ENCODE measurements at regions of chr11 and their contacts with region 1.

Region 1: DNA sequence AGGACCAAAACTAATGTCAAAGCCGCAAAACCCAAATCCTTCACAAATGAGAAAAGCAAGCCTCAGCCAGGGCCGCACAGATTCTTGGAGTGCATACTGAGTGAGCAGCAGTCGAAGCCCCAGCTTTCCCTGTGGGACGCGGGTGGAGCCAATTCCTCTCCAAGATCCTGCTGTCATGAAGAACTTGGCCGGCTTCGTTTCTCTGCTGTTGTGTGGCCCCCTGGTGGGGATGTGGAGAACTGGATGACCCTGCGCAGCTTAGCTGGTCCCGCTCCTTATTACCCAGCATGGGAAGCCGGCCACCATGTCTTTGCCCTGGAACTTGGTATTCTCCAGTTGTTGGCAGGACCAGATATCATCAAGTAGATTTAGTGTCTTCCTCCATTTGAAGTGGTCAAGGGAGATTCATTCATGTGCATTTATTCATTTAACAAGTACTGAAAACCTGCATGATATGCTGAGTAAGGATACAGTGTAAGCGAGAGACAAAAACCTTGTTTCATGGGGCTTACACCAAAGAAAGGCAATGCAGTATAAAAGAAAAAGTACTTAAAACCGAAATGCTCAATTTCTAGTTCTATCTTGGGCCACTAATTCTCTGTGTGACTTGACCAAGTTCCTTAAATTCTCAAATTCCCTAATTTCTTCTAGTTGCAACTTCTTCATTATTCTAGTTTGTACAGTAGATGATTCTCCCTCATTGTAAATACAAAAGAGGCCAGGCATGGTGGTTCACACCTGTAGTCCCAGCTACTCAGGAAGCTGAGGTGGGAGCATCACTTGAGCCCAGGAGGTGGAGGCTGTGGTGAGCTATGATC is 56.7 kb upstream of the CRTAM start:
- DNase-seq: peak; percentile 78 to 90 (median 84)
- H3K4me3 ChIP-seq: no peak overlapping the region
- H3K27ac ChIP-seq: no peak overlapping the region
- H3K4me1 ChIP-seq: peaks cover 9% of the 10 kb centered on the region
- H3K27me3 ChIP-seq: no peaks in the 10 kb centered on the region
- CTCF ChIP-seq: peak; percentile 43 to 84 (median 80)
- EP300 ChIP-seq: no peak
- POLR2A ChIP-seq: no peak

Region 2: DNA sequence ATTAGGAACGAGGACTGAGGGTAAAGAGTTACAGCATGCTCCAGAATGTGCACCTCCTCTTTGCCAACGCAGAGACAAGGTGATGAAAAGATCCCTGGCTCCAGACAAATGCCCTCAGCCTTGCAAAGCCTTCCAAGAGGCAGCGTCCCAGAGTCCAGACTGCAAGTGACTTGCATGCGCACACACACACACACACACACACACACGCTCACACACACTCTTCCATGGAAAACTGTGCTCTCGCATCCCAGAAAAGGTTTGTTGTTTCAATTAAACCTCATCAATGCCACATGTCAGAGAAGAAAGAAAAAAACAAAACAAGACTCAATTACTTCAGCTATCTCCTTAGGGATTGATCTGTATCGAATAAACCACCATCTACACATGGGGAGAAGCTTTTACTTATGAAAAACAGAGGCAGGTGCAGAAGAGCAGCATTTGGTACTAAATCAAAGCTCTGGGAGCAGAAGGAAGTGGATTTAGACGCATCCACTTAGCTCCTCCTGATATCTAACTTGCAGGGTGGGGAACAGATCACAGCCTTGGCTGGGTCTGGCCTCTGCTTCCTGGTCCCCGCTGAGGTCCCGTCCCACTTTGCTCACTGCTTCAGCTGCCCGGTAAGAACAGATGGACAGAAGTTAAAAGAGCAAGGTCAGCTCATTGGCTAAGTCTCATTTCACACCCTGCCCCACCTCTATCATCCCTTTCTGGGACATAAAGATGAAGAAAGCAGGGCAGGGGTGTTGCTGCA is 415.8 kb before region 1 on chr11:
- intact Hi-C with region 1: no loop called
- DNase-seq: peak in 2 of 5 donors; percentile 28 to 46
- H3K4me3 ChIP-seq: no peak overlapping the region
- H3K27ac ChIP-seq: no peak overlapping the region
- H3K4me1 ChIP-seq: peaks cover 9% of the 10 kb centered on the region
- H3K27me3 ChIP-seq: no peaks in the 10 kb centered on the region
- CTCF ChIP-seq: no peak
- EP300 ChIP-seq: no peak
- POLR2A ChIP-seq: no peak

Region 3: DNA sequence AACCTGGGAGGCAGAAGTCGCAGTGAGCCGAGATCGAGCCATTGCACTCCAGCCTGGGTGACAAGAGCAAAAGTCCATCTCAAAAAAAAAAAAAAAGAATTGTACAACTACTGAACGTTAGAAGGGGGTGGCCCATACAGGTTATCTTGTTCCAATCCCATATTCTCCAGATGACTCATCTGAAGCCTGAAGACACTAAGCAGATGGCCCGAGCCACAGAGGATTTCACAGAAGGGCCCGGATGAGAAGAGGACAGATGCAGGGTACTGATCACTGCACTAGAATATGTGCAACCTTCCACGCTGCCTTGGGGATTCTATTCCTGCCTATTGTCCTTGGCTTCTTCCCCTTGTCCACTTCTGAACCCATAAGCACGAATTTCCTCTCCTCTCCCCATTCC is 196.9 kb before region 1 on chr11:
- intact Hi-C with region 1: loop called in 1 of 4 experiments (anchors 5 kb)
- DNase-seq: no peak
- H3K4me3 ChIP-seq: no peak overlapping the region
- H3K27ac ChIP-seq: no peak overlapping the region
- H3K4me1 ChIP-seq: no peaks in the 10 kb centered on the region
- H3K27me3 ChIP-seq: no peaks in the 10 kb centered on the region
- CTCF ChIP-seq: no peak
- EP300 ChIP-seq: no peak
- POLR2A ChIP-seq: no peak

Region 4: DNA sequence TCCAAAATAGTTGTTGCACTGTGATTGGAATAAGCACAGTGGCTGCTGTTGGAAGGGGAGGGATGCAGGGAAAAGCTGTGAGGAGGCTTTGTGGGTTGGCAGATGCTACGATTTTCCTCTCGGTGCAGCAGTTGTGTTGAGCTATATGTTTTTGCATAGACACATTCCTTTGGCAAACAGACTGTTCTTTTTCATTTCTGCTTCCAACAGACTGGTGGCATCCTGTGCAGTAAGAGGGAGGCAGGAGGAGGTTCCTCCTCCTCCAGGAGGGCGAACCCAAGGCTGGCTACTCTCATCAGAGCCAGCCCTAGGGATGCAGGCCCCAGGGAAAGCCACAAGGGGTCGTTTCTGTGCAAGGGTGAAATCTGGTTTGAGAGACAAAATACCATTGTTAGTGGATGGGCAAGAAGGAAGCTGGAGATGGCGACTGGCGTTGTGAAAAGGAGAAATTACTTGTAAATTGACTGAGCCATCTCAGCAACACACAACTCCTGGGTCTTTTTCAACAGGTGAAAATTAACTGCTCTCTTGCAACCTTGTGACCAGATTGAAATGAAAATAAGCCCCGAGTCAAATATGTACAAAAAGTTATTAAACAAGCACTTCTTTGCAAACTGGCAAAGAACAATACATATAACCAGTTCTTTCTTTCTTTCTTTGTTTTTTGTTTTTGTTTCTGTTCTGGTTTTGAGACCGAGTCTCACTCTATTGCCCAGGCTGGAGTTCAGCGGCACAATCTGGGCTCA is 152.6 kb before region 1 on chr11:
- intact Hi-C with region 1: loop called in 1 of 4 experiments (anchors 5 kb)
- DNase-seq: peak; percentile 22 to 68 (median 49)
- H3K4me3 ChIP-seq: no peak overlapping the region
- H3K27ac ChIP-seq: no peak overlapping the region
- H3K4me1 ChIP-seq: no peaks in the 10 kb centered on the region
- H3K27me3 ChIP-seq: no peaks in the 10 kb centered on the region
- CTCF ChIP-seq: peak; percentile 18 to 58 (median 27)
- EP300 ChIP-seq: no peak
- POLR2A ChIP-seq: no peak

Region 5: GRCh38 chr11:122655527-122656072 is 126.0 kb before region 1 on chr11 and contains the start of gene UBASH3B:
- intact Hi-C with region 1: loop called in 3 of 4 experiments (anchors 10 kb)
- DNase-seq: peak; percentile 47 to 69 (median 62)
- H3K4me3 ChIP-seq: peak within 1 kb of the TSS; percentile 72
- H3K27ac ChIP-seq: peak within 1 kb of the TSS; percentile 51 to 81
- H3K4me1 ChIP-seq: peaks cover 4% of the 10 kb centered on the region
- H3K27me3 ChIP-seq: no peaks in the 10 kb centered on the region
- CTCF ChIP-seq: no peak
- EP300 ChIP-seq: no peak
- POLR2A ChIP-seq: no peak
- total RNA-seq, gene UBASH3B: 0.92 to 5.9 (median 1.8) TPM

Region 6: DNA sequence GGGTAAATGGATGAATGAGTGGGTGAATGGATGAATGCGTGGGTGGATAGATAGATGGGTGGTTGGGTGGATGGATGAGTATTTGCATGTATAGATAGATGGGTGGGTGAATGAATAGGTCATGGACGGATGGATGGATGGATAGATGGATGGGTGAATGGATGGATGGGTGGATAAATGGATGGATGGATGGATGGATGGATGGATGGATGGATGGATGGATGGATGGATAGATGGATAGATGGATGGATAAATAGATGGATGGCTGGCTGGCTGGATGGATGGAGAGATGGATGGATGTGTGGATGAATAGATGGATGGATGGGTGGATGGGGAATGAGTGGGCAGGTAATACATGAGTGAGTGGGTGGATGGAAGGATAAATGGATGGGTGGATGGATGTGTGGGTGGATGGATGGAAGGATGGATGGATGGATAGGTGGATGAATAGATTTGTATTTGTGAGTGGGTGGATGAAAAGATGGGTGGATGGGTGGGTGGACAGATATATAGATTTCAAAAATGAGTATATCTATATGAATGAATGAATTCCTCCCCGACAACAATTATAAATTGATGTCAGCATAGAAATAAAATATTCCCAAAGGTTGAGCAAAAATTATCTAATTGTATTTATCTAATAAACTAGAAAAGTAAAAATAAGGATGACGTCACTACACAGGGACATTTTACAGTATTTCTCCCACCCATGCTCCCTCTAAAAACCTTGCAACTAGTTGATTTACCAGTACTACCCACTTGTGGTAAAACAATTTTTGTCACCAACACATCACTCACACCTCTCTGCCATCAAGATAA is 56.1 kb after region 1 on chr11:
- intact Hi-C with region 1: loop called in 1 of 4 experiments (anchors 2 kb)
- DNase-seq: no peak
- H3K4me3 ChIP-seq: no peak overlapping the region
- H3K27ac ChIP-seq: no peak overlapping the region
- H3K4me1 ChIP-seq: no peaks in the 10 kb centered on the region
- H3K27me3 ChIP-seq: no peaks in the 10 kb centered on the region
- CTCF ChIP-seq: no peak
- EP300 ChIP-seq: no peak
- POLR2A ChIP-seq: no peak

Measured in ovary (tissue), 10 donors.